ENCODE measurements at regions of chr10 and their contacts with region 1.

Region 1: GRCh38 chr10:72215652-72216549 is at the starts of genes ANAPC16 and ASCC1:
- DNase-seq: peak; percentile 92 to 98 (median 96)
- H3K4me3 ChIP-seq: peak within 1 kb of the TSS; percentile 70 to 88
- H3K4me3 Mint-ChIP-seq: peak within 1 kb of the TSS; percentile 95 to 100 (median 98)
- H3K27ac ChIP-seq: peak within 1 kb of the TSS; percentile 88
- H3K27ac Mint-ChIP-seq: peak within 1 kb of the TSS; percentile 97 to 100 (median 99)
- H3K4me1 ChIP-seq: peaks cover 47% of the 10 kb centered on the region
- H3K4me1 Mint-ChIP-seq: peaks cover 31 to 58% (median 44%) of the 10 kb centered on the region in 4 donors
- H3K27me3 ChIP-seq: no peaks in the 10 kb centered on the region
- H3K27me3 Mint-ChIP-seq: no peaks in the 10 kb centered on the region
- total RNA-seq, gene ANAPC16: 114 to 118 TPM
- total RNA-seq, gene ASCC1: 14.3 to 17.5 TPM

Region 2: GRCh38 chr10:72107325-72108003 is 108.4 kb before region 1 on chr10:
- CTCF ChIA-PET with region 1: no interaction called
- POLR2A ChIA-PET with region 1: interaction called, 13 read pairs
- intact Hi-C with region 1: no loop called
- DNase-seq: peak; percentile 62 to 72 (median 71)
- H3K4me3 ChIP-seq: peak overlapping the region in 1 of 2 donors; percentile 16
- H3K4me3 Mint-ChIP-seq: peak overlapping the region; percentile 61 to 87 (median 81)
- H3K27ac ChIP-seq: peak overlapping the region; percentile 53
- H3K27ac Mint-ChIP-seq: peak overlapping the region; percentile 81 to 97 (median 90)
- H3K4me1 ChIP-seq: peaks cover 78% of the 10 kb centered on the region
- H3K4me1 Mint-ChIP-seq: peaks cover 61 to 91% (median 80%) of the 10 kb centered on the region in 4 donors
- H3K27me3 ChIP-seq: no peaks in the 10 kb centered on the region
- H3K27me3 Mint-ChIP-seq: no peaks in the 10 kb centered on the region

Region 3: GRCh38 chr10:72248468-72249151 is 32.7 kb after region 1 on chr10:
- CTCF ChIA-PET with region 1: interaction called, 11 read pairs
- POLR2A ChIA-PET with region 1: interaction called, 16 read pairs
- intact Hi-C with region 1: loop called (anchors 2 kb)
- DNase-seq: peak; percentile 85 to 90 (median 87)
- H3K4me3 ChIP-seq: peak overlapping the region; percentile 31 to 33
- H3K4me3 Mint-ChIP-seq: peak overlapping the region; percentile 83 to 92 (median 86)
- H3K27ac ChIP-seq: peak overlapping the region; percentile 55
- H3K27ac Mint-ChIP-seq: peak overlapping the region; percentile 95 to 98 (median 96)
- H3K4me1 ChIP-seq: peaks cover 96% of the 10 kb centered on the region
- H3K4me1 Mint-ChIP-seq: peaks cover 58 to 91% (median 77%) of the 10 kb centered on the region in 4 donors
- H3K27me3 ChIP-seq: no peaks in the 10 kb centered on the region
- H3K27me3 Mint-ChIP-seq: no peaks in the 10 kb centered on the region

Region 4: DNA sequence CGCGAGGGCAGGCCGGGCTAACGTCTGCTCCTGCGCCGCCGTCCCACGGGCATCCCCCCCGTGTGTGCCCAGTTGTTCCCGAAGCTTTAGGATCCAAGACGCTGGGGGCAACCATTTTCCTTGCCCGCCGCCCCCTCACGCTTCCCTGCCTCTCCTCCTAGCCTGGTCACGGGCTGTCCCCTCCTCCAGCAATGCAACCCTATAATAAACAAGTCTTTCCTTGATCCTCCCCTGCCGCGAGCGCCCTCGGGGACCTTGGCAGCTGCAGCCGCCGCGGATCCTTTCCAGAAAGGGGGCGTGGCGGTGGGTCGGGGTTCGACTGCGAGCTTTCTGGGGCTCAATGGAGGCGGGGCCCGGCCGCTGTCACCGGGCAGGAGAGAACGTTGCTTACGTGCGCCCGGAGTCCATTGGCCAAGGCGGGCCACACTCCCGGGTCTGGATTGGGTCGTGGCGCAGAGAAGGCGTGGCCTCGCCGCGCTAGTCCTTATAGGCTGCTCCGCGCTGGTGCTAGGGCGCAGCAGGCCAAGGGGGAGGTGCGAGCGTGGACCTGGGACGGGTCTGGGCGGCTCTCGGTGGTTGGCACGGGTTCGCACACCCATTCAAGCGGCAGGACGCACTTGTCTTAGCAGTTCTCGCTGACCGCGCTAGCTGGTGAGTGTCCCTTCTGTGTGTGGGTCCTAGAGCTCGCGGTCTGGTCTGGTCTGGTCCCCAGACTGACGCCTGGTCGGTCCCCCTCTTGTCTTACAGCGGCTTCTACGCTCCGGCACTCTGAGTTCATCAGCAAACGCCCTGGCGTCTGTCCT is 57.7 kb after region 1 on chr10 and contains the start of gene DDIT4:
- CTCF ChIA-PET with region 1: interaction called, 11 read pairs
- POLR2A ChIA-PET with region 1: interaction called, 17 read pairs
- intact Hi-C with region 1: loop called (anchors 2 kb)
- DNase-seq: peak; percentile 95 to 98 (median 96)
- H3K4me3 ChIP-seq: peak within 1 kb of the TSS; percentile 99 to 100
- H3K4me3 Mint-ChIP-seq: peak within 1 kb of the TSS; percentile 96 to 100 (median 98)
- H3K27ac ChIP-seq: peak within 1 kb of the TSS; percentile 99
- H3K27ac Mint-ChIP-seq: peak within 1 kb of the TSS; percentile 83 to 99 (median 96)
- H3K4me1 ChIP-seq: peaks cover 51% of the 10 kb centered on the region
- H3K4me1 Mint-ChIP-seq: peaks cover 23 to 60% (median 39%) of the 10 kb centered on the region in 4 donors
- H3K27me3 ChIP-seq: no peaks in the 10 kb centered on the region
- H3K27me3 Mint-ChIP-seq: no peaks in the 10 kb centered on the region
- total RNA-seq, gene DDIT4: 23.1 to 24.5 TPM

Region 5: DNA sequence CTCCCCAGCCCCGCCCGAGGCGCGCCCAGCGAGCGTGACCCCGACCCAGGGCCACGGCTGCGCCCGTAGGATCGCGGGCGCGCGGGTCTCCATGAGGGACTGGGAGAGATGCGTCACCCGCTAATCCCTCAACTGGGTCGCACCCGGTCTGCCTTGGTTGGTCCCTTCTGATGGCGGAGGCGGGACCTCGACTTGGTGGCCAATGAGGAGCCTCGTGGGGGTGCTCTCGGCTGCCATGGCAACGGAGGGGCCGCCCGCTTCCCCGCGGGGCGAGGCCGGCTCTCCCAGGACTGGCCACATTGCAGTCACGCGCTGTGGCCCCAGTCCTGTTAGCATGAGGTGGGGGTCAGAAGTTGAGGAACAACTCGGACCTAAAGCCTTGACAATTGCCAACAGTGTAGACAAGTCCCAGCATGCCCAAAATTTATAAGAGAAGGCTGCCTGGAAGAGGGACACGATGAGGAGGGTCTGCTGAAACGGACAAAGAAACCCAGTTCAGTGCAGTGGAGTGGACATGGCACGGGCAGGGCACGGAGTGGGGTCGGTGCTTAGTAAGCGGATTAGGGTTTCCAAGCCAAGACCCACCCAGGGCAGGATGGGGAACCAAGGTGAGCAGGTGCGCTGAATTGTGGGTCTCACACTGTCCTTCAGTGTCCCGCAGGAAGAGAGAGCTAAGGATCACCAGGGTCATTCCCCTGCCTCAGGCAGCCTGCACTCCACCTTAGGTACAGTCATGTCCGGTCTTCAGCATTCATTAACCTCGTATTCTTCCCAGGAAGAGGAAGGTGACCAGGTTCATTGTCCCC is 82.3 kb after region 1 on chr10:
- CTCF ChIA-PET with region 1: interaction called, 3 read pairs
- POLR2A ChIA-PET with region 1: interaction called, 21 read pairs
- intact Hi-C with region 1: loop called (anchors 1 kb)
- DNase-seq: peak; percentile 89 to 95 (median 91)
- H3K4me3 ChIP-seq: peak overlapping the region in 1 of 2 donors; percentile 71
- H3K4me3 Mint-ChIP-seq: peak overlapping the region; percentile 29 to 94 (median 86)
- H3K27ac ChIP-seq: peak overlapping the region; percentile 95
- H3K27ac Mint-ChIP-seq: peak overlapping the region; percentile 96 to 100 (median 100)
- H3K4me1 ChIP-seq: peaks cover 56% of the 10 kb centered on the region
- H3K4me1 Mint-ChIP-seq: peaks cover 26 to 67% (median 46%) of the 10 kb centered on the region in 4 donors
- H3K27me3 ChIP-seq: no peaks in the 10 kb centered on the region
- H3K27me3 Mint-ChIP-seq: no peaks in the 10 kb centered on the region

Region 6: GRCh38 chr10:72354478-72355213 is 138.7 kb after region 1 on chr10 and contains the start of gene DNAJB12:
- CTCF ChIA-PET with region 1: no interaction called
- POLR2A ChIA-PET with region 1: interaction called, 5 read pairs
- intact Hi-C with region 1: loop called (anchors 1 kb)
- DNase-seq: peak; percentile 92 to 97 (median 94)
- H3K4me3 ChIP-seq: peak within 1 kb of the TSS; percentile 92 to 99
- H3K4me3 Mint-ChIP-seq: peak within 1 kb of the TSS; percentile 94 to 99 (median 97)
- H3K27ac ChIP-seq: peak within 1 kb of the TSS; percentile 80
- H3K27ac Mint-ChIP-seq: peak within 1 kb of the TSS; percentile 90 to 99 (median 98)
- H3K4me1 ChIP-seq: peaks cover 34% of the 10 kb centered on the region
- H3K4me1 Mint-ChIP-seq: peaks cover 30 to 54% (median 42%) of the 10 kb centered on the region in 4 donors
- H3K27me3 ChIP-seq: no peaks in the 10 kb centered on the region
- H3K27me3 Mint-ChIP-seq: no peaks in the 10 kb centered on the region
- total RNA-seq, gene DNAJB12: 26.3 to 26.7 TPM

Region 7: DNA sequence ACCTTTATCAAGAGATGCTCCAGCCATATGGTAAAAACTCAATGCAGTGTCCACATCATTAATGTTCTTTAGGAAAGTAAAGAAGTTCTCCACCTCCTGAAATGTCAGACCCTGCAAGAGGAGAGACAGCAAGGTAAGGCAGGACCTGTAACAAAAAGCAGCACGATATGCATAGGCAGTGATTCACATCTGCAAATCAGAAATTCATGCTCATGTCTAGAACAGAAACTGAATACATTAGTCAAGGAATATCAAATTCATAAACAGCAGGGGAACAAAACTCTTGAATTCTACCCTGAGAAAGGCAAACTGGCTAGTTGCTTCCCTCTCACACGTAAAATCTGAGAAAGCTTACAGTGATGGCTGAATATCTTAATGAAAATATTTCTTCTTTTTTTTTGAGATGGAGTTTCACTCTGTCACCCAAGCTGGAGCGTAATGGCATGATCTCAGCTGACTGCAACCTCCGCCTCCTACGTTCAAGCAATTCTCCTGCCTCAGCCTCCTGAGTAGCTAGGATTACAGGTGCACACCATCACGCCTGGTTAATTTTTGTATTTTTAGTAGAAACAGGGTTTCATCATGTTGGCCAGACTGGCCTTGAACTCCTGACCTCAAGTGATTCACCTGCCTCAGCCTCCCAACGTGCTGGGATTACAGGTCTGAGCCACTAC is 192.2 kb after region 1 on chr10:
- CTCF ChIA-PET with region 1: no interaction called
- POLR2A ChIA-PET with region 1: no interaction called
- intact Hi-C with region 1: no loop called
- DNase-seq: no peak
- H3K4me3 ChIP-seq: no peak overlapping the region
- H3K4me3 Mint-ChIP-seq: no peak overlapping the region
- H3K27ac ChIP-seq: no peak overlapping the region
- H3K27ac Mint-ChIP-seq: peak overlapping the region in 3 of 7 donors; percentile 47 to 76 (median 68)
- H3K4me1 ChIP-seq: no peaks in the 10 kb centered on the region
- H3K4me1 Mint-ChIP-seq: no peaks in the 10 kb centered on the region
- H3K27me3 ChIP-seq: no peaks in the 10 kb centered on the region
- H3K27me3 Mint-ChIP-seq: no peaks in the 10 kb centered on the region

Region 8: DNA sequence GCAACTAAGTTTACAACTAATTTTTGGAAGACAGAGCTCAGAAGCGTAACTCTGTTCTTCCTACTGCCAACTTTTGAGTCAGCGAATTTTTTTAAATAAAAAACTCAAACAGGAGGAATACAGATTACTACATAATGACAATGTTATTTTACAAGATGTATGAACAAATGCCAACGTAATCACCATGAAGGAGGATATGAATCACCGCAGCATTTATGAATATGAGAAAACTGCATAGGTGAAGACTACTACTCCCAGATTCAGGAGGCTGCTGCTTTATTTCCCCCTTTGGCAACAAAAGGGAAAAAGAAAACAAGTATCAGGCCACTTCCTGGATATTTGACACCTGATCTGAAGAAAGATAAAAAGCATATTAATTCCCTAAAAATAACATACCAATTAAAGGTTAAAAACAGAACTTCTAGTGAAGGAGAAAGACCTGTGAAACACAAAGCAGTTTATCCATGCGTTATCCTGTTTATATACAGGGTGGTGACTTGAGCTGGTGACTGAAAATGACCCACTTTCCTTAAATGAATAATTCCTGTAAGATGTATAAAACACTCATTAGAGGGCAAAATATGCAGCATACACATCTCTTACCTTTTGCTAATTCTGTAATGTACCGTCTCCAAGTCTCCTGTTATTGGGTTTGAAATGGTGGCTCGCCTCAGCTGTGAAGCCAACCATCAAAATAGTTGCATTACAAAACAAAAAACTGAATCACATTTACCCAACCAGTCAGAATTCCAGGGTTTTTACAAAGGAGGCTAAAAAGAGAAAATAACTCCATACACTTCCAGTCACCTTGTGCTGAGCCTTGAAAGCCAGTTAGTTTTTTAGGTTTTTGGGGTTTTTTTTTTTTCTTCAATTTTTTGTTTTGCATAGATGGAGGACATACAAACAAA is 828.7 kb after region 1 on chr10:
- CTCF ChIA-PET with region 1: no interaction called
- POLR2A ChIA-PET with region 1: no interaction called
- intact Hi-C with region 1: no loop called
- DNase-seq: no peak
- H3K4me3 ChIP-seq: no peak overlapping the region
- H3K4me3 Mint-ChIP-seq: no peak overlapping the region
- H3K27ac ChIP-seq: no peak overlapping the region
- H3K27ac Mint-ChIP-seq: no peak overlapping the region
- H3K4me1 ChIP-seq: no peaks in the 10 kb centered on the region
- H3K4me1 Mint-ChIP-seq: no peaks in the 10 kb centered on the region
- H3K27me3 ChIP-seq: no peaks in the 10 kb centered on the region
- H3K27me3 Mint-ChIP-seq: no peaks in the 10 kb centered on the region

Measured in CD4-positive, alpha-beta memory T cell (primary cell).